CD14-positive monocyte (primary cell): ENCODE measurements at regions of chr12 and their contacts with region 1.

Region 1: GRCh38 chr12:120856980-120857379 is 47.2 kb downstream of the SPPL3 start:
- DNase-seq: peak in 1 of 3 donors; percentile 14
- H3K4me3 ChIP-seq: no peak overlapping the region
- H3K4me3 Mint-ChIP-seq: no peak overlapping the region
- H3K27ac ChIP-seq: peak overlapping the region in 1 of 2 donors; percentile 56
- H3K27ac Mint-ChIP-seq: peak overlapping the region in 2 of 7 donors; percentile 20 to 78
- H3K4me1 ChIP-seq: peaks cover 29 to 43% of the 10 kb centered on the region in 2 donors
- H3K4me1 Mint-ChIP-seq: peaks cover 59% of the 10 kb centered on the region
- H3K27me3 ChIP-seq: no peaks in the 10 kb centered on the region
- H3K27me3 Mint-ChIP-seq: peaks cover 0 to 2% (median 0%) of the 10 kb centered on the region in 3 donors
- CTCF ChIP-seq: peak; percentile 39

Region 2: GRCh38 chr12:120820885-120821510 is 36.0 kb before region 1 on chr12:
- intact Hi-C with region 1: no loop called
- DNase-seq: no peak
- H3K4me3 ChIP-seq: no peak overlapping the region
- H3K4me3 Mint-ChIP-seq: no peak overlapping the region
- H3K27ac ChIP-seq: no peak overlapping the region
- H3K27ac Mint-ChIP-seq: no peak overlapping the region
- H3K4me1 ChIP-seq: peaks cover 0 to 3% of the 10 kb centered on the region in 2 donors
- H3K4me1 Mint-ChIP-seq: peaks cover 26% of the 10 kb centered on the region
- H3K27me3 ChIP-seq: no peaks in the 10 kb centered on the region
- H3K27me3 Mint-ChIP-seq: peaks cover 0 to 2% (median 0%) of the 10 kb centered on the region in 3 donors
- CTCF ChIP-seq: no peak

Region 3: DNA sequence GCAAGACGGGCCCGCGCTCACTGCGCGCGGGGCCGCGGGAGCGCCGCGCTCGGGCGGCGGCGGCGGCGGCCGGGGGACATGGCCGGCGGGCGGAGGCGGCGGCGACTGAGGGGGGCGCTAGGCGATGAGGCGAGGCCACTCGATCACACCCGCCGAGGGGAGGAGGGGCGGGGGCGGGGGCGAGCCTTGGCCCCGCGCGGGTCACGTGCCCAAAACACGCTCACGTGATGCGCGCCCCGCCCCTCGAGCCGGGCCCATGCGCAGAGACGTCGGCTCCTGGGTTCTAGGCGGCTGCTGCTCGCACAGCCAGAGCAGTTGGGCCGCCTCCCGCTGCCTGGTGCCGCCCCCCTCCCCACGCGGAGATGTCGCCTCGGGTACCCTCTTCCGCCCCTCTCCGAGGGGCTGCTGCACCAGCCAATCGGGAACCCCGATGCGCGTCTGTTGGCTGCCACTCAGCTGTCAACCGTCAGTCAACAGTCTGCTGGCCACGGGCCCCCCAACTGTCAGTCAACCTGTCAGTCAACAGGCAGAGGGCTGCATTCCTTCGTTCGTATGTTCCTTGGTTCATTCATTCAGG is 47.3 kb after region 1 on chr12 and contains the start of gene SPPL3:
- intact Hi-C with region 1: loop called (anchors 5 to 10 kb)
- DNase-seq: peak; percentile 79 to 84 (median 82)
- H3K4me3 ChIP-seq: peak within 1 kb of the TSS; percentile 53 to 90 (median 68)
- H3K4me3 Mint-ChIP-seq: peak within 1 kb of the TSS; percentile 100
- H3K27ac ChIP-seq: peak within 1 kb of the TSS; percentile 51 to 87
- H3K27ac Mint-ChIP-seq: peak within 1 kb of the TSS; percentile 88 to 97 (median 93)
- H3K4me1 ChIP-seq: peaks cover 31 to 36% of the 10 kb centered on the region in 2 donors
- H3K4me1 Mint-ChIP-seq: peaks cover 31% of the 10 kb centered on the region
- H3K27me3 ChIP-seq: no peaks in the 10 kb centered on the region
- H3K27me3 Mint-ChIP-seq: peaks cover 0 to 2% (median 0%) of the 10 kb centered on the region in 3 donors
- CTCF ChIP-seq: no peak
- polyA plus RNA-seq, gene SPPL3: 14.5 to 18.6 (median 18.5) TPM

Region 4: DNA sequence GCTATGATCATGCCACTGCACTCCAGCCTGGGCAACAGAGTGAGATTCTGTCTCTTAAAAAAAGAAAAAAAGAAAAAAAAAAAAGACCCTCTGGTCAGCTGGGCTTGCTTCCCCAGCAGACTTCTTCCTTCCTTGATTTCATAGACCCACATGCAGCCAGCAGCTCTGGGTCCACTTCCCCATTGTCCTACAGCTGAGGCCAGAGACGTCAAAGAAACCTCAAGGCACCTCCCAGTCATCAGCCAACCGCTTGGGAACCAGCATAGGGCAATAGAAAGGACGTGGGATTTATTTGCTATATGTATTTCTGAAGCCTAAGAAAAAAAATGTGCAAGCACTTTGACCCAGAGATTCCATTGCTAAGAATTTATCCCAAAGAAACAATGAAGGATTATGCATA is 82.5 kb after region 1 on chr12:
- intact Hi-C with region 1: loop called in 1 of 2 experiments (anchors 5 kb)
- DNase-seq: peak; percentile 76 to 87 (median 82)
- H3K4me3 ChIP-seq: peak overlapping the region in 1 of 3 experiments; percentile 50
- H3K4me3 Mint-ChIP-seq: peak overlapping the region in 1 of 2 donors; percentile 55
- H3K27ac ChIP-seq: peak overlapping the region; percentile 7 to 71
- H3K27ac Mint-ChIP-seq: peak overlapping the region; percentile 65 to 90 (median 86)
- H3K4me1 ChIP-seq: peaks cover 71 to 78% of the 10 kb centered on the region in 2 donors
- H3K4me1 Mint-ChIP-seq: peaks cover 82% of the 10 kb centered on the region
- H3K27me3 ChIP-seq: no peaks in the 10 kb centered on the region
- H3K27me3 Mint-ChIP-seq: peaks cover 0 to 2% (median 0%) of the 10 kb centered on the region in 3 donors
- CTCF ChIP-seq: no peak